ENCODE measurements at regions of chr9 and their contacts with region 1.

Region 1: GRCh38 chr9:70111042-70111602 is 67.5 kb downstream of the MAMDC2 start:
- DNase-seq: peak; percentile 83
- H3K4me3 ChIP-seq: no peak overlapping the region
- H3K27ac ChIP-seq: peak overlapping the region; percentile 57
- H3K4me1 ChIP-seq: peaks cover 18% of the 10 kb centered on the region
- H3K27me3 ChIP-seq: no peaks in the 10 kb centered on the region
- CTCF ChIP-seq: peak; percentile 89

Region 2: DNA sequence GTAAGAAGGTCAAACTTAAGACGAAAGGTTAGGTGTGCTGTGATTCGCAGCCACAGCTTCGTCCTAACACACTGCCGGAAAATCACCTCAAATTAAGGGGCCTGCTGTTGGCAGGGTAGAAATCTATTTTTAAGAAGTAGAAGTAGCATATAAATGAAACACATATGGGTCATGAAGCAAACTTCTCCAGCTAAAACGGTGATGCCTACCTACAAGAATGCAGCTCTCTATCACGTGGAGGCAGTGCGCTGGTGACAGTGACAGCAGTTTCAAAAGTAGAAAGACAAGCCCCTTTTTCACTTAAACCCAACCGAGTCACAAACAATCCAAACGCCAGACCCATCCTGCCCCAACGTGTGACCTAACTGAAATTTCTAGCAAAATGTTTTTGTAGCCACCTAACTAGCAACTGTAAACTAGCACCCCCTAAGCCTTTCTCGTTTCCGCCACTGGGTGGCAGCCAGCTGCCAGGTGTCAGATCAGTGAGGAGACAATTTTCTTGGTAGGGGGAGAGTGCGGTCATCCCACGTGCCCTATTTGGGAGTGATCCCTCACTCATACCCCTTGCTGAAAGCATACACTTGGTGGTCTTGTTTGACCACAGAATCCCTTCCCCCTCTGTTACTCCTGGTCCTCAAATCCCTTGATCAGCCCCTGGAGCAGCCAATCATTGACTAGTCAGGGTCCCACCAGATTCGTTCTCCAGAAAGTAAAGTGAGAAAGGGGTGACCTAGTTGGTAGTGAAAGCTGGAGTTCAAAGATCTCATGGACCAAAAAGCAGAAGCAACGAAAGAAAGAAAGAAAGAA is 139.3 kb before region 1 on chr9:
- intact Hi-C with region 1: loop called (anchors 5 kb)
- DNase-seq: peak; percentile 80
- H3K4me3 ChIP-seq: no peak overlapping the region
- H3K27ac ChIP-seq: no peak overlapping the region
- H3K4me1 ChIP-seq: peaks cover 16% of the 10 kb centered on the region
- H3K27me3 ChIP-seq: peaks cover 2% of the 10 kb centered on the region
- CTCF ChIP-seq: peak; percentile 90

Region 3: GRCh38 chr9:70229579-70229978 is 118.5 kb after region 1 on chr9:
- intact Hi-C with region 1: loop called (anchors 10 kb)
- DNase-seq: no peak
- H3K4me3 ChIP-seq: peak overlapping the region; percentile 23
- H3K27ac ChIP-seq: peak overlapping the region; percentile 63
- H3K4me1 ChIP-seq: peaks cover 16% of the 10 kb centered on the region
- H3K27me3 ChIP-seq: no peaks in the 10 kb centered on the region
- CTCF ChIP-seq: peak; percentile 40